IMR-90 (cell line): ENCODE measurements at regions of chr1 and their contacts with region 1.

Region 1: GRCh38 chr1:220189750-220190347 is 82.4 kb downstream of the RAB3GAP2 start:
- DNase-seq: peak; percentile 37
- ATAC-seq: peak; percentile 56
- H3K4me3 ChIP-seq: no peak overlapping the region
- H3K27ac ChIP-seq: no peak overlapping the region
- H3K4me1 ChIP-seq: no peaks in the 10 kb centered on the region
- H3K27me3 ChIP-seq: no peaks in the 10 kb centered on the region
- CTCF ChIP-seq: peak; percentile 54
- POLR2A ChIP-seq: no peak
- RAD21 ChIP-seq: peak; percentile 47; the same call in 1 of the 2 replicates

Region 2: DNA sequence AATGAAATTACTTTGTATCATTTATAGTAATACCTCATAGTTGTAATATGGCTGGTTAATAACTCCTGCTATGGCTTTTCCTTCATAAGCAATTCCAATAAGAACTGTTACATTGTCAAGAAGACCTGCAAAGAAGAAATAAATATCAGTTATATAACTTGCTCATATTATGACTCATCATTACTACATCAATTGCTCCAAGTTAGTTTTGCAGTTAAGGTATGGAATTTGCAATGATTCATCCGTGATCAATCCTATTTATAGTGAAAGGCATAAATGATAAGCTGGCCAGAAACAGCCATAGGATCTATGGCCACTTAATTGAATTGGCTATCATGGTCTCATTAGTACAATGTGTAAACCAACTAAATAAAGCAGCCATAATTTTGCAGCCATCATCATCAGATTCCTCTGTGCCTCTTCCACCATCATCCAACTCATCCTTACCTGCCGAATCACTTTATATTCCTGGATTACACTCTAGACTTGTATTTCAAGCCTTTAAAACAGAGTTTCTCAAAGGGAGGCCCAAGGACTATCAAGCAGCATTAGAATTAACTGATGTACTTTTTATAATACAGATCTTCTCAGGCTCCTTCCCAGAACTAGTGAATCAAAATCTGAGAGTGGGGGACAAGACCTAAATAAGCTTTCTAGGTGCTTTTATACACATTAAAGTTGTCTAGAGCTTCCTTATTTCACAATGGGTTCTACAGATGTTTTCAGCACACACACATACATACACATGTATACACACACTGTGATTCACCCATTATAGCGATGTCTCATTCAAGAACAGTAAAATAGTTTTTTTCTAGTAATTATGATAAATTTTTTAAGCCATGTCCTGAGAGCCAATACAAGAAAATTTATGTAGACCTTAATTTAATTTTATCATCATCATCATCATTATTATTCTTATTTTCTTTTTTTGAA is 122.3 kb before region 1 on chr1:
- CTCF ChIA-PET with region 1: no interaction called
- POLR2A ChIA-PET with region 1: no interaction called
- dilution Hi-C with region 1: no loop called
- in situ Hi-C with region 1: no loop called
- intact Hi-C with region 1: no loop called
- DNase-seq: peak; percentile 66
- ATAC-seq: no peak
- H3K4me3 ChIP-seq: no peak overlapping the region
- H3K27ac ChIP-seq: no peak overlapping the region
- H3K4me1 ChIP-seq: peaks cover 3% of the 10 kb centered on the region; the same call in 1 of the 2 replicates
- H3K27me3 ChIP-seq: no peaks in the 10 kb centered on the region
- CTCF ChIP-seq: no peak
- POLR2A ChIP-seq: no peak
- RAD21 ChIP-seq: no peak

Region 3: GRCh38 chr1:220077887-220078286 is 112.0 kb before region 1 on chr1:
- CTCF ChIA-PET with region 1: no interaction called
- POLR2A ChIA-PET with region 1: no interaction called
- dilution Hi-C with region 1: no loop called
- in situ Hi-C with region 1: no loop called
- intact Hi-C with region 1: no loop called
- DNase-seq: no peak
- ATAC-seq: no peak
- H3K4me3 ChIP-seq: no peak overlapping the region
- H3K27ac ChIP-seq: no peak overlapping the region
- H3K4me1 ChIP-seq: no peaks in the 10 kb centered on the region
- H3K27me3 ChIP-seq: no peaks in the 10 kb centered on the region
- CTCF ChIP-seq: no peak
- POLR2A ChIP-seq: no peak
- RAD21 ChIP-seq: no peak

Region 4: DNA sequence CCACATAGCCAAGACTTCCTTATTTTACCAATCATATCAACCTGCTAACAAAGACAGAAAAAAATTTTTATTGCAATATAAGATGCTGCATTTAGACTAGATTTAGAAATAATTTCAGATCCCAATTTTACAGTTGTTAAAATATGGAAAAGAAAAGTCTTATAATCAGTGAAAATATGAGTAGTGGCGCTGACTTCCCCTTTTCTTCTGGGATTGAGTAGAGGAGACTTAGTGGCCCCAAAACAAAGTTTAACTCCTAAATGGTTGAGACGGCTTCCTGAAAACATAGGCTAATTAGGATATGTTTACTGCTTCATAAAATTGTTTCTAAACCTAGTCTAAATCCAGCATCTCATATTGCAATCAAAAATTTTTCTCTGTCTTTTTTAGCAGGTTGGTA is 14.0 kb after region 1 on chr1:
- CTCF ChIA-PET with region 1: no interaction called
- POLR2A ChIA-PET with region 1: no interaction called
- dilution Hi-C with region 1: no loop called
- in situ Hi-C with region 1: no loop called
- intact Hi-C with region 1: loop called (anchors 2 kb)
- DNase-seq: no peak
- ATAC-seq: no peak
- H3K4me3 ChIP-seq: no peak overlapping the region
- H3K27ac ChIP-seq: no peak overlapping the region
- H3K4me1 ChIP-seq: peaks cover 2% of the 10 kb centered on the region; the same call in 1 of the 2 replicates
- H3K27me3 ChIP-seq: no peaks in the 10 kb centered on the region
- CTCF ChIP-seq: no peak
- POLR2A ChIP-seq: no peak
- RAD21 ChIP-seq: no peak